ENCODE measurements at regions of chr12 and their contacts with region 1.

Region 1: GRCh38 chr12:92529944-92530343 is 172.8 kb upstream of the PLEKHG7 start:
- DNase-seq: no peak
- CTCF ChIP-seq: no peak

Region 2: DNA sequence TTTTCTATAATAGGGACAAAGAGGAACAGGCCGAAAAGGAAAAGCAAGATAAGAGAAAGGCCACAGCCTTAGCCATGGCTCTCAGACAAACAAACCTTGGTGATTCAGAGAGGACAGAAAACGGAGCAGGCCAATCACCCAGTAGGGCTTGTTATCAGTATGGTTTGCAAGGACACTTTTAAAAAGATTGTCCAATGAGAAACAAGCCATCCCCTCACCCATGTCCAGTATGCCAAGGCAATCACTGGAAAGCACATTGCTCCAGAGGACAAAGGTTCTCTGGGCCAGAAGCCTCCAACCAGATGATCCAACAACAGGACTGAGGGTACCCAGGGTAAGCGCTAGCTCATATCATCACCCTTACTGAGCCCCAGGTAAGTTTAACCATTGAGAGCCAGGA is 140.5 kb before region 1 on chr12:
- CTCF ChIA-PET with region 1: no interaction called
- POLR2A ChIA-PET with region 1: no interaction called
- DNase-seq: no peak
- CTCF ChIP-seq: no peak

Region 3: DNA sequence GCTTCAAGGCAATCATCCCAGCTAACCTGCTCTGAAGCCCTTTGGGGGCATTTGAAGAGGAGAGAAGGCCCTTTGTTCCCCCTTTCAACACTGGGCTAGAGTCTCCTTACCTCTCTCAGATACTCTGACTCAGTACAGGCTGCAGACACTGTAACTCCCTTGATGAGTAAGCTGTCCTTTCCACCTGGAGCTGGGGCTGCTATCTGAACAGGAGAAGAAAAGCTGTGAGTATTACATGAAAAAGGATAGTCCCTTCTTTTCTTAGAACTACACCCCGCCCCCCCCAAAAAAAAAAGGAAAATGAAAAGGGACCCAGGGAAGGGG is 13.7 kb before region 1 on chr12:
- CTCF ChIA-PET with region 1: interaction called, 15 read pairs
- POLR2A ChIA-PET with region 1: no interaction called
- DNase-seq: no peak
- CTCF ChIP-seq: no peak

Region 4: GRCh38 chr12:92582475-92582874 is 52.5 kb after region 1 on chr12:
- CTCF ChIA-PET with region 1: no interaction called
- POLR2A ChIA-PET with region 1: no interaction called
- DNase-seq: no peak
- CTCF ChIP-seq: no peak

Region 5: DNA sequence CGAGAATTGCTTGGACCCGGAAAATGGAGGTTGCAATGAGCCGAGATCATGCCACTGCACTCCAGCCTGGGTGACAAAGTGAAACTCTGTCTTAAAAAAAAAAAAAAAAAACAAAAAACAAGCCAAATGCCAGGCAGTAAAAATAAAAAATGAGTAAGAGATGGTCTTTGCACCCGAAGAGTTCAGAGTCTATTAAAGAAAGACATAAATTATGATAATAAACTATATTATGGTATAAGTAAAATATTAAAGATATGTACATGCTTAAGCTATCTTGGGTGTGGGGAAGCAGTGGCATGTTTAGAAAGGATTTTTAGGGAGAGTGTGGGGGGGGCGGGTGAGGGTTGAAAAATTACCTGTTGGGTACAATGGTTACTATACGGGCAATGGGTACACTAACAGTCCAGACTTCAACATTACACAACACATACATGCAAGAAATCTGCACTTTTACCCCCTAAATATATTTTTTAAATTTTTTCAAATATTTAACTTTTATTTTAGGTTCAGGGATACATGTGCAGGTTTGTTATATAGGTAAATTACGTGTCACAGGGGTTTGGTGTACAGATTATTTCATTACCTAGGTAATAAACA is 299.8 kb after region 1 on chr12:
- CTCF ChIA-PET with region 1: no interaction called
- POLR2A ChIA-PET with region 1: no interaction called
- DNase-seq: no peak
- CTCF ChIP-seq: no peak

Measured in GM10248 (cell line).